Endothelial cell of umbilical vein (primary cell): ENCODE measurements at regions of chr7 and their contacts with region 1.

Region 1: GRCh38 chr7:44847508-44847920 is 373 bp downstream of the H2AZ2 start:
- DNase-seq: peak; percentile 91
- H3K4me3 ChIP-seq: peak overlapping the region; percentile 38 to 97 (median 65)
- H3K27ac ChIP-seq: peak overlapping the region; percentile 51
- H3K4me1 ChIP-seq: peaks cover 17% of the 10 kb centered on the region
- H3K27me3 ChIP-seq: no peaks in the 10 kb centered on the region
- CTCF ChIP-seq: peak; percentile 89 to 94
- POLR2A ChIP-seq: no peak

Region 2: GRCh38 chr7:44348300-44348699 is 499.2 kb before region 1 on chr7:
- CTCF ChIA-PET with region 1: no interaction called
- POLR2A ChIA-PET with region 1: no interaction called
- dilution Hi-C with region 1: no loop called
- intact Hi-C with region 1: no loop called
- DNase-seq: peak; percentile 67
- H3K4me3 ChIP-seq: no peak overlapping the region
- H3K27ac ChIP-seq: no peak overlapping the region
- H3K4me1 ChIP-seq: no peaks in the 10 kb centered on the region
- H3K27me3 ChIP-seq: peaks cover 9 to 23% of the 10 kb centered on the region in 2 experiments
- CTCF ChIP-seq: peak; percentile 57 to 82
- POLR2A ChIP-seq: no peak

Region 3: GRCh38 chr7:44490351-44491200 is 356.9 kb before region 1 on chr7 and contains the start of gene NUDCD3:
- CTCF ChIA-PET with region 1: no interaction called
- POLR2A ChIA-PET with region 1: no interaction called
- dilution Hi-C with region 1: no loop called
- intact Hi-C with region 1: loop called (anchors 2 kb)
- DNase-seq: peak; percentile 87
- H3K4me3 ChIP-seq: peak within 1 kb of the TSS; percentile 65 to 94 (median 65)
- H3K27ac ChIP-seq: peak within 1 kb of the TSS; percentile 91
- H3K4me1 ChIP-seq: peaks cover 38% of the 10 kb centered on the region
- H3K27me3 ChIP-seq: peaks cover 0 to 4% of the 10 kb centered on the region in 2 experiments
- CTCF ChIP-seq: peak; percentile 6 to 26
- POLR2A ChIP-seq: peak; percentile 75
- total RNA-seq, gene NUDCD3: 117 and 137 TPM in 2 replicates

Region 4: GRCh38 chr7:44587843-44588711 is 259.4 kb before region 1 on chr7:
- CTCF ChIA-PET with region 1: interaction called, 22 read pairs
- POLR2A ChIA-PET with region 1: interaction called, 6 read pairs
- dilution Hi-C with region 1: no loop called
- intact Hi-C with region 1: loop called (anchors 1 kb)
- DNase-seq: peak; percentile 81
- H3K4me3 ChIP-seq: no peak overlapping the region
- H3K27ac ChIP-seq: no peak overlapping the region
- H3K4me1 ChIP-seq: no peaks in the 10 kb centered on the region
- H3K27me3 ChIP-seq: no peaks in the 10 kb centered on the region
- CTCF ChIP-seq: peak; percentile 27 to 48
- POLR2A ChIP-seq: no peak

Region 5: GRCh38 chr7:44735403-44736165 is 111.9 kb before region 1 on chr7:
- CTCF ChIA-PET with region 1: no interaction called
- POLR2A ChIA-PET with region 1: no interaction called
- dilution Hi-C with region 1: no loop called
- intact Hi-C with region 1: no loop called
- DNase-seq: peak; percentile 92
- H3K4me3 ChIP-seq: peak overlapping the region in 1 of 3 experiments; percentile 66
- H3K27ac ChIP-seq: peak overlapping the region; percentile 100
- H3K4me1 ChIP-seq: peaks cover 20% of the 10 kb centered on the region
- H3K27me3 ChIP-seq: no peaks in the 10 kb centered on the region
- CTCF ChIP-seq: no peak
- POLR2A ChIP-seq: no peak

Region 6: DNA sequence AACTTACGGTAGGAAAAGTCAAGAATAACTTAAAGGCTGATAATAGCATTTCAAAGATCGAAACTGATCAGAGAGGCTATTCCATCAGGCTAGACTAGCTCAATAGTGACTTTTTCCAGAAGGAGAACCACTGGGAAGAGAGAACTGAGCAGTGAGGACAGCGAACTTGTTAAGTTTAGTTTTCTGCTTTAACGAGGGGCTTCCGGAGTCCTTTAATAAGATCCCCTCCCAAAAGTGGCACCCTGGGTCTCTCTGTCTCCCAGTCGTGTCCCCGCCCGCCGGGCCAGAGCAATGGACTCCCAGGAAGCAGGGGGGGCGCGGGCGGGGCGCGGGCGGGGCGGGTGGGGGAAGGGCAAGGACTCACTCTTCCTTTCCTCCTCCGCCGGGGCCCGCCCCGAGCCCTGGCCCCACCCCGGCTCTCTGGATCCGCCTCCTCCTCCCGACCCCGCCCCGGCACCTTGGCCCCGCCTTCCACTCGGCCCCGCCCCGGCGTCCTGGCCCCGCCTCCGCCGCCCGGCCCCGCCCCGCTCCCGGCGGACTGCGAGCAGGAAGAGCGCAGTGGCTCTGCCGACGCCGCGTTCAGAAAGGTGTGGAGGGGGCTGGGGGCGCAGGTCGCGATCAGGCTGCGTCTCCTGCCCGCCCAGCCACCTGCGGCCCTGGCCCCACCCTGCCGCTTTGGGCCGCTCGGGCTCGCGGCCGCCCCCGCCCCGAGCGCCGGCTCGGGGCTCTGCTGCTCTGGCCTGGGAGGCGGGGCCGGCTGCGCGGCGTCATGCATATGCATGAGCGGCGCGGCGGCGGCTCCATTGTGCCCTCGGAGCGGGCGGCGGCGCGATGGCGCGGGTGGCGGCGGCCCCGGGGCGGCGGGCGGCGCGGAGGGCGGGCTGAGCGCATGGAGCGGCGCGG is 99.2 kb before region 1 on chr7 and contains the start of gene ZMIZ2:
- CTCF ChIA-PET with region 1: interaction called, 3 read pairs
- POLR2A ChIA-PET with region 1: no interaction called
- dilution Hi-C with region 1: no loop called
- intact Hi-C with region 1: loop called (anchors 5 kb)
- DNase-seq: peak; percentile 88
- H3K4me3 ChIP-seq: peak within 1 kb of the TSS; percentile 46 to 98 (median 71)
- H3K27ac ChIP-seq: peak within 1 kb of the TSS; percentile 82
- H3K4me1 ChIP-seq: peaks cover 22% of the 10 kb centered on the region
- H3K27me3 ChIP-seq: no peaks in the 10 kb centered on the region
- CTCF ChIP-seq: no peak
- POLR2A ChIP-seq: peak; percentile 68
- total RNA-seq, gene ZMIZ2: 87.5 and 88.6 TPM in 2 replicates

Region 7: GRCh38 chr7:44827567-44827966 is 19.9 kb before region 1 on chr7:
- CTCF ChIA-PET with region 1: interaction called, 10 read pairs
- POLR2A ChIA-PET with region 1: no interaction called
- dilution Hi-C with region 1: no loop called
- intact Hi-C with region 1: no loop called
- DNase-seq: no peak
- H3K4me3 ChIP-seq: no peak overlapping the region
- H3K27ac ChIP-seq: no peak overlapping the region
- H3K4me1 ChIP-seq: peaks cover 34% of the 10 kb centered on the region
- H3K27me3 ChIP-seq: no peaks in the 10 kb centered on the region
- CTCF ChIP-seq: no peak
- POLR2A ChIP-seq: no peak

Region 8: DNA sequence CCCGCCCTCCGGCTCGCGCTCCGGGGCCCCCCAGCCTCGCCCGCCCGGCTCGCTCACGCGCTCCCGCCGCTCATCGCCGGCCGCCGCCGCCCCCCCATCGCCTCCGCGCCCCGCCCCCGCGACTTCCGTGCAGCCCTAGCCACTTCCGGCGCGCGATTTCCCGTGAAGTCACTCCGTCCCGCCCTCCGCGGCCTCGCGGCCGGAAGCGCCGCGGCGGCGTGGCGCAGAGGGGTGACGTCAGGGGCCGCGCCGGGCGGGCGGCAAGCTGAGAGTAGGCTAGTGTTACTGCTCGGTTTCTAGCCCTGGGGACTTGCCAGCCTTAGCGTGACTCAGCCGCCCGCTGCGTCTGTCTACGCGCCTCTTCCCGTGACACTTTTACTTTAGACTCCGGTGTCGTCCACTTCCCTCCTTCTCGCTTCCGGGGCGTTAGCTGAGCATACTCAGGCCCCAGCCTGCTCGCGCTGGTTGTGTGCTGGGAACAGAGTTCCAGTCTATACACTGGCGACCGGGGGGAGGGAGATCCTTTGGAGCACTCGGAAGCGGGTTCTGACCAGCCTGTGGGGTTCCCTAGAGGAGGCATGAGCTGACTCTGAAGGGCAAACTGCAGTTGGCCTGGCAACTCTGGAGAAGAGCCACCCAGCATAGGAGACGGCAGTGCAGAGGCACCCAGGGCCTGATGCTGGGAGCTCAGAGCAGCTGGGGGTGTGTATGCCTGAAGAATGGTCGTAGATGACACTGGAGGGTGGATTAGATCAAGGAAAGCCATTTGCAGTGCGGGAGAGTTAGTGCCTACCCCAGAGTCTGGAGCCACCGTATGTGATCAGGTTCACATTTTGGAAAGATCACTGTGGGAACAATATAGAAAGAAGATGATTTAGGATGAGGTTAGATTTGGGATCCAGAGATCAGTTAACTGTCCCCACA is 38.1 kb after region 1 on chr7 and contains the start of gene PURB:
- CTCF ChIA-PET with region 1: interaction called, 10 read pairs
- POLR2A ChIA-PET with region 1: interaction called, 7 read pairs
- dilution Hi-C with region 1: no loop called
- intact Hi-C with region 1: loop called (anchors 1 kb)
- DNase-seq: peak; percentile 97
- H3K4me3 ChIP-seq: peak within 1 kb of the TSS; percentile 30 to 85 (median 78)
- H3K27ac ChIP-seq: peak within 1 kb of the TSS; percentile 91
- H3K4me1 ChIP-seq: peaks cover 42% of the 10 kb centered on the region
- H3K27me3 ChIP-seq: no peaks in the 10 kb centered on the region
- CTCF ChIP-seq: no peak
- POLR2A ChIP-seq: no peak
- total RNA-seq, gene PURB: 25.0 and 25.5 TPM in 2 replicates

Region 9: GRCh38 chr7:44999245-45000095 is 152.0 kb after region 1 on chr7:
- CTCF ChIA-PET with region 1: no interaction called
- POLR2A ChIA-PET with region 1: interaction called, 4 read pairs
- dilution Hi-C with region 1: no loop called
- intact Hi-C with region 1: loop called (anchors 1 kb)
- DNase-seq: peak; percentile 100
- H3K4me3 ChIP-seq: peak overlapping the region; percentile 57 to 97 (median 96)
- H3K27ac ChIP-seq: peak overlapping the region; percentile 79
- H3K4me1 ChIP-seq: peaks cover 31% of the 10 kb centered on the region
- H3K27me3 ChIP-seq: no peaks in the 10 kb centered on the region
- CTCF ChIP-seq: no peak
- POLR2A ChIP-seq: peak; percentile 66